AG04449 (cell line): ENCODE measurements at regions of chr15 and their contacts with region 1.

Region 1: DNA sequence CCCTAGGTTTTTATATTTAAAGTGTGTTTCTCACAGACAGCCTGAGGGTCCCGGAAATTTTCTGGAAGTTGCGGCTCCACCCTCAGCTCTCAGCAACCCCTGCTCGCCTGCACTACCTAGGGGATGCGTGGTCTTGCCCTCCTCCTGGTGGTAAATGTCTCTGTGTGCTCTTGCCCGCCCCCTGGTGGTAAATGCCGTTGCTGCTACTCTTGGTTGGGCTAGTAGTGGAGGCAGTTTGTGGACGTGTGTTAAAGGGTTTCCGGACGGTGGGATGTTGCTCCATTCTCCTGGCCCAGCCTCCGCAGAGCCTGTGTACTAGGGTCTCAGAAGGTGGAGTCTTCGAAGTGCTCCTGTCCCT is 27.4 kb downstream of the STOML1 start:
- DNase-seq: no peak
- H3K4me3 ChIP-seq: no peak overlapping the region
- CTCF ChIP-seq: peak; percentile 99

Region 2: GRCh38 chr15:73851689-73852088 is 113.0 kb before region 1 on chr15:
- CTCF ChIA-PET with region 1: no interaction called
- POLR2A ChIA-PET with region 1: no interaction called
- DNase-seq: no peak
- H3K4me3 ChIP-seq: no peak overlapping the region
- CTCF ChIP-seq: no peak

Region 3: GRCh38 chr15:73927476-73928240 is 37.1 kb before region 1 on chr15:
- CTCF ChIA-PET with region 1: interaction called, 10 read pairs
- POLR2A ChIA-PET with region 1: interaction called, 4 read pairs
- DNase-seq: no peak
- H3K4me3 ChIP-seq: peak overlapping the region; percentile 80
- CTCF ChIP-seq: peak; percentile 62

Region 4: GRCh38 chr15:73941871-73942635 is 22.7 kb before region 1 on chr15:
- CTCF ChIA-PET with region 1: interaction called, 317 read pairs
- POLR2A ChIA-PET with region 1: no interaction called
- DNase-seq: no peak
- H3K4me3 ChIP-seq: no peak overlapping the region
- CTCF ChIP-seq: no peak

Region 5: DNA sequence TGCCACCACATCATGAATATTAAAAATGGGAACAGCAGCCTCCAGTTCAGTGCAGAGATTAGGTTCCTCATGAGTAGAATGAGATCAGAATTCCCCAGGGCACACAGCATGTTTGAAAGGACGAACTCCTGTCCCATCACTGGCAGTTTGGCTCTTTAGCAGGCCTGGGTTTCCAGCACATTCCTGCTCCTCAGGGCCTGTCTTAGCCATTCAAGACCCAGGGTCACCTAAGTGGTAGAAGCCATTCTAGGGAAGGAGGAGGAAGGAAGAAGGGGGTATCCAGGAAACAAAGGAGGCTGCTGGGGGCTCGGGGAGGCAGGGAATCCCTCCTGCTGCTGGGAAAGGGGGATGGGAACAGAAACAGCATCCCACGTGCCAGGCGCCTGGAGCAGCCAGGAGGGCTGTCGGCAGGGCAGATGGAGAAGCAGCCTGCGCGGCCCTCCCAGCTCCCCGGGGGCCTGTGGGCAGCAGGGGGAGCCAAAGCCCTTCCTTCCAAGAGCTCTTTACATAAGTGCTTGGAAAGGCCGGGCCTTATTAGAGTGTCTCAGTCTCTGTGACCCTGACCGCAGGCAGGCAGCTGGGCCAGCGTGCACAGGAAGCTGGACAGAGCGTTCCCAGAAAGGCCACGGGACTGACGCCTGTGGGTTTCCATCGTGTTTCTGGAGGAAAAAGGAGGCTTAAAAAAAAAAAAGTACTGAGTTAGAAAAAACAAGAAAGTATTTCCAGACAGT is 13.7 kb before region 1 on chr15:
- CTCF ChIA-PET with region 1: interaction called, 317 read pairs
- POLR2A ChIA-PET with region 1: interaction called, 4 read pairs
- DNase-seq: peak; percentile 91
- H3K4me3 ChIP-seq: no peak overlapping the region
- CTCF ChIP-seq: peak; percentile 93

Region 6: GRCh38 chr15:73982222-73982962 is 17.7 kb after region 1 on chr15:
- CTCF ChIA-PET with region 1: interaction called, 112 read pairs
- POLR2A ChIA-PET with region 1: no interaction called
- DNase-seq: peak; percentile 81
- H3K4me3 ChIP-seq: peak overlapping the region; percentile 20
- CTCF ChIP-seq: no peak

Region 7: GRCh38 chr15:74482661-74483060 is 517.9 kb after region 1 on chr15:
- CTCF ChIA-PET with region 1: no interaction called
- POLR2A ChIA-PET with region 1: no interaction called
- DNase-seq: no peak
- H3K4me3 ChIP-seq: no peak overlapping the region
- CTCF ChIP-seq: peak; percentile 10